ENCODE measurements at regions of chr11 and their contacts with region 1.

Region 1: DNA sequence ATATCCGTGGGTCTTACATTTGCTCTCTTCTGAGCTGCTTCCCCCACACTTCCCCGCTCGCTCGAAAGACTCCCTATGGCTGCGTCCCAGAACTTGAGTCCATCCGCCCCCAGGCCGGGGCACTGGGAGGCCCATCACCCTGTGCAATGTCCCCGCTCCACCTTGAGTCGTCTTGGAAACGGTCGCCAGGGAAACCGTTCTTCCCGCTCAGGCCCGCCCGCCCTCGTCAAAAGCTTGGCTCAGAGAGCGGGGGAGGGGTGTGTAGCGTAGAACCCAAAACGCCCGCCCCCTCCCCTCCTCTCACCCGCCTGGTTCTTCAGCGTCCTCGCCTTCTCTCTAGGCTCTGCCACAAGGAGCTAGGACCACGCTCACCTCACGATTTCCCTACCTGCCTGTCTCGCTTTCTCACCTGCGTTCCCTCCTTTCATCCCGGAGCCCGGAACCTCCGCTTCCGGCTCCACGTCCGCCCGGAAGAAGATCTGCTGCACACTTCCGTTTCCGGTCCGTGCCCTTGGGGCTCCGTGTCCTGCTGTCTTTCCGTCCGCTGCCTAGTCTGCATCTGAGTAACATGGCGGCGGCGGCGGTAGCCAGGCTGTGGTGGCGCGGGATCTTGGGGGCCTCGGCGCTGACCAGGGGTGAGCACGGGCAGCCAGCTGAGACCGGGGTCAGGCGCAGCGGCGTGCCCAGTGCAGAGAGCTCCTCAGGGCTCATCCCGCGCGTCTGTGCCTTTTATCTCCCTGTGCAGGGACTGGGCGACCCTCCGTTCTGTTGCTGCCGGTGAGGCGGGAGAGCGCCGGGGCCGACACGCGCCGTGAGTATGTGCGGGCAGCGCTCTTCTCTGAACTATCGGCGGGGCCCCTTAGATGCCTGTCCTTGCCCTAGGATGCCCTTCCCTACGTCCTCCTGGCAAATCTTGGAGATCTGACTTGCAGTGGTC is at the starts of genes KBTBD4 and NDUFS3:
- DNase-seq: peak; percentile 77 to 97 (median 93)

Region 2: GRCh38 chr11:47407746-47408590 is 170.8 kb before region 1 on chr11 and contains the start of gene SLC39A13:
- intact Hi-C with region 1: loop called (anchors 5 kb)
- DNase-seq: peak; percentile 76 to 97 (median 94)

Region 3: GRCh38 chr11:47688111-47688510 is 109.3 kb after region 1 on chr11:
- intact Hi-C with region 1: no loop called
- DNase-seq: no peak